ENCODE measurements at regions of chr1 and their contacts with region 1.

Region 1: GRCh38 chr1:119582801-119583200 is 65.3 kb downstream of the ZNF697 start:
- DNase-seq: peak; percentile 15 to 75
- H3K4me3 ChIP-seq: no peak overlapping the region
- H3K27ac ChIP-seq: no peak overlapping the region
- H3K4me1 ChIP-seq: peaks cover 0 to 3% (median 1%) of the 10 kb centered on the region in 4 experiments; a peak in 1 of 7 replicates
- H3K27me3 ChIP-seq: no peaks in the 10 kb centered on the region
- CTCF ChIP-seq: peak; percentile 54 to 82 (median 80)
- EP300 ChIP-seq: no peak
- POLR2A ChIP-seq: no peak
- RAD21 ChIP-seq: peak; percentile 87 to 91

Region 2: DNA sequence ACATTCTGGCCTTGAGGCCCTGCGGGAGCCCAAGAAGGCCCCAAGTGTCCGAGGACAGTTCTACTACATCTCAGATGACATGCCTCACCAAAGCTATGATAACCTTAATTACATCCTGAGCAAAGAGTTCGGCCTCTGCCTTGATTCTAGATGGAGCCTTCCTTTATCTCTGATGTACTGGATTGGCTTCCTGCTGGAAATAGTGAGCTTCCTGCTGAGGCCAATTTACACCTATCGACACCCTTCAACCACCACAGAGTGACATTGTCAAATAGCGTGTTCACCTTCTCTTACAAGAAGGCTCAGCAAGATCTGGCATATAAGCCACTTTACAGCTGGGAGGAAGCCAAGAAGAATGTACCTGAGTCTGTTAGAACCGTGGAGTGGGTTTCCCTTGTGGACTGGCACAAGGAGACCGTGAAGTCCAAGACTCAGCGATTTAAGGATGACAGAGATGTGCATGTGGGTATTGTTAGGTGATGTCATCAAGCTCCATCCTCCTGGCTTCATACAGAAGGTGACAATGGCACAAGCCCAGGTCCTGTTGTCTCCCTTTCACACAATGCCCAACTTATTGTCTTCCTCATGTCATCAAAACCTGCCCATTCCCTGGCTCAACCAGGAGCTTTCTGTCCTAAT is 26.1 kb after region 1 on chr1:
- CTCF ChIA-PET with region 1: interaction called, 17 read pairs
- POLR2A ChIA-PET with region 1: no interaction called
- DNase-seq: no peak
- H3K4me3 ChIP-seq: no peak overlapping the region
- H3K27ac ChIP-seq: no peak overlapping the region
- H3K4me1 ChIP-seq: peaks cover 0 to 2% (median under 1%) of the 10 kb centered on the region in 4 experiments; a peak in 4 of 7 replicates
- H3K27me3 ChIP-seq: no peaks in the 10 kb centered on the region
- CTCF ChIP-seq: no peak
- EP300 ChIP-seq: no peak
- POLR2A ChIP-seq: no peak
- RAD21 ChIP-seq: no peak